Calu3 (cell line): ENCODE measurements at regions of chr13 and their contacts with region 1.

Region 1: GRCh38 chr13:46975173-46975572 is 78.3 kb upstream of the HTR2A start:
- DNase-seq: no peak
- H3K4me3 Mint-ChIP-seq: no peak overlapping the region
- H3K27ac Mint-ChIP-seq: no peak overlapping the region
- H3K4me1 Mint-ChIP-seq: no peaks in the 10 kb centered on the region
- H3K27me3 Mint-ChIP-seq: no peaks in the 10 kb centered on the region
- CTCF ChIP-seq: no peak

Region 2: GRCh38 chr13:47598340-47598911 is 623.3 kb after region 1 on chr13:
- CTCF ChIA-PET with region 1: no interaction called
- intact Hi-C with region 1: loop called (anchors 10 kb)
- DNase-seq: no peak
- H3K4me3 Mint-ChIP-seq: no peak overlapping the region
- H3K27ac Mint-ChIP-seq: no peak overlapping the region
- H3K4me1 Mint-ChIP-seq: no peaks in the 10 kb centered on the region
- H3K27me3 Mint-ChIP-seq: no peaks in the 10 kb centered on the region
- CTCF ChIP-seq: no peak

Region 3: GRCh38 chr13:47774671-47774994 is 799.5 kb after region 1 on chr13:
- CTCF ChIA-PET with region 1: no interaction called
- intact Hi-C with region 1: loop called (anchors 10 kb)
- DNase-seq: no peak
- H3K4me3 Mint-ChIP-seq: no peak overlapping the region
- H3K27ac Mint-ChIP-seq: no peak overlapping the region
- H3K4me1 Mint-ChIP-seq: no peaks in the 10 kb centered on the region
- H3K27me3 Mint-ChIP-seq: no peaks in the 10 kb centered on the region
- CTCF ChIP-seq: no peak